ENCODE measurements at regions of chr4 and their contacts with region 1.

Region 1: GRCh38 chr4:79712736-79713135 is 304.7 kb upstream of the GK2 start:
- DNase-seq: no peak
- ATAC-seq: no peak
- H3K4me3 ChIP-seq: no peak overlapping the region
- H3K27ac ChIP-seq: no peak overlapping the region
- H3K4me1 ChIP-seq: no peaks in the 10 kb centered on the region
- H3K27me3 ChIP-seq: no peaks in the 10 kb centered on the region
- CTCF ChIP-seq: no peak
- POLR2A ChIP-seq: no peak
- RAD21 ChIP-seq: no peak

Region 2: GRCh38 chr4:79763486-79764075 is 50.8 kb after region 1 on chr4:
- CTCF ChIA-PET with region 1: no interaction called
- POLR2A ChIA-PET with region 1: no interaction called
- dilution Hi-C with region 1: no loop called
- in situ Hi-C with region 1: no loop called
- intact Hi-C with region 1: no loop called
- DNase-seq: no peak
- ATAC-seq: no peak
- H3K4me3 ChIP-seq: no peak overlapping the region
- H3K27ac ChIP-seq: no peak overlapping the region
- H3K4me1 ChIP-seq: no peaks in the 10 kb centered on the region
- H3K27me3 ChIP-seq: no peaks in the 10 kb centered on the region
- CTCF ChIP-seq: no peak
- POLR2A ChIP-seq: no peak
- RAD21 ChIP-seq: no peak

Region 3: GRCh38 chr4:79982601-79983322 is 270.0 kb after region 1 on chr4:
- CTCF ChIA-PET with region 1: no interaction called
- POLR2A ChIA-PET with region 1: interaction called, 11 read pairs
- dilution Hi-C with region 1: no loop called
- in situ Hi-C with region 1: no loop called
- intact Hi-C with region 1: no loop called
- DNase-seq: peak; percentile 17
- ATAC-seq: no peak
- H3K4me3 ChIP-seq: no peak overlapping the region
- H3K27ac ChIP-seq: no peak overlapping the region
- H3K4me1 ChIP-seq: no peaks in the 10 kb centered on the region
- H3K27me3 ChIP-seq: no peaks in the 10 kb centered on the region
- CTCF ChIP-seq: no peak
- POLR2A ChIP-seq: no peak
- RAD21 ChIP-seq: no peak

Measured in IMR-90 (cell line).